ENCODE measurements at regions of chr20 and their contacts with region 1.

Region 1: GRCh38 chr20:38073307-38074071 is 39.9 kb downstream of the RPRD1B start:
- DNase-seq: peak; percentile 46
- CTCF ChIP-seq: peak; percentile 58

Region 2: GRCh38 chr20:38049800-38050199 is 23.7 kb before region 1 on chr20:
- CTCF ChIA-PET with region 1: interaction called, 29 read pairs
- POLR2A ChIA-PET with region 1: no interaction called
- DNase-seq: no peak
- CTCF ChIP-seq: no peak

Region 3: GRCh38 chr20:38057351-38057972 is 16.0 kb before region 1 on chr20:
- CTCF ChIA-PET with region 1: interaction called, 130 read pairs
- POLR2A ChIA-PET with region 1: no interaction called
- DNase-seq: peak; percentile 74
- CTCF ChIP-seq: peak; percentile 79

Region 4: DNA sequence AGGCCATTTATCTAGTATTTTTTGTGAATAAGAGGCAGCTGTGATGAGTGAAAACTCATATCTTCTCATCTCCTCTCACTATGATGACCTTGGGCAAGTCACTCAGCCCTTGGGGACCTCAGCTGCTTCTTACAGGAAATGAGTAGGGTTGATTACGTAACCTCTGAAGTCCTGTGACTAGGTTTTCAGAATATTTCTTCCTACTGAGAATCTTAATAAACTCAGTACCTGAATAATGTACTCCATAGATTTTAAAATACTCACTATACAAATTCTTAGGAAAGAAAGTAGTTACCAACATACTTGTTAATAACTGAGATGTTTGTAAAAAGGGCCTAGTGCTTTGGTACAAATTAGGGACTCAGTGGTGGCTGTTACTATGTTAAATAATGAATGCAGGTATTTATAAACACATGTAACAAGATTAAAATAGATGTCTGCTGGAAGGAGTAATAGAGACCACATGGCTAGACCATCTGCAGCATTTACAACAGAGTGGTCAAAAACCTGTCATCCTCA is 20.9 kb after region 1 on chr20:
- CTCF ChIA-PET with region 1: interaction called, 144 read pairs
- POLR2A ChIA-PET with region 1: interaction called, 3 read pairs
- DNase-seq: peak; percentile 72
- CTCF ChIP-seq: no peak

Region 5: GRCh38 chr20:38113401-38114325 is 40.2 kb after region 1 on chr20:
- CTCF ChIA-PET with region 1: interaction called, 40 read pairs
- POLR2A ChIA-PET with region 1: no interaction called
- DNase-seq: no peak
- CTCF ChIP-seq: no peak

Region 6: DNA sequence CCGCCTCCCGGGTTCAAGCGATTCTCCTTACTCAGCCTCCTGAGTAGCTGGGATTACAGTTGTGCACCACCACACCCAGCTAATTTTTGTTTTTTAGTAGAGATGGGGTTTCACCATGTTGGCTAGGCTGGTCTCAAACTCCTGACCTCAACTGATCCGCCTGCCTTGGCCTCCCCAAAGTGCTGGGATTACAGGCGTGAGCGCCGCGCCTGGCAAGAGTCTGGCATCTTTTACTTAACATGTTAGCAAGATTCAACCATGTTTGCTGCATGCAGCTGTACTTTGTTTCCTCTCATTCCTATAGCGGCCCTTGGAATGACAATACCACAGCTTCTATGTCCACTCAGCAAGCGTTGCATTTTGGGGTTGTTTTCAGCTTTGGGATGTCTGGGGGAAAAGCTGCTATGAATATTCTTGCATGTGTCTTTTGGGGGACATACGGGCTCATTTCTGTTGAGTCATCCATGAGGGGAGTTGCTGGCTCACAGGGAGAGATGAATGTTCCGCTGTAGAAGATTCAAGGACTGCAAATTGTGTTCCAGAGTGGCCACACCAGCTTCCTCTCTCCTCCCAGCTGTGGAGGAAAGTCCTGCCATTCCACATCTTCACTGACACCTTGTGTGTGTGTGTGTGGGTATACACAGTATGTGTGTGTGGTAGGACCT is 48.1 kb after region 1 on chr20:
- CTCF ChIA-PET with region 1: interaction called, 40 read pairs
- POLR2A ChIA-PET with region 1: no interaction called
- DNase-seq: no peak
- CTCF ChIP-seq: no peak

Region 7: DNA sequence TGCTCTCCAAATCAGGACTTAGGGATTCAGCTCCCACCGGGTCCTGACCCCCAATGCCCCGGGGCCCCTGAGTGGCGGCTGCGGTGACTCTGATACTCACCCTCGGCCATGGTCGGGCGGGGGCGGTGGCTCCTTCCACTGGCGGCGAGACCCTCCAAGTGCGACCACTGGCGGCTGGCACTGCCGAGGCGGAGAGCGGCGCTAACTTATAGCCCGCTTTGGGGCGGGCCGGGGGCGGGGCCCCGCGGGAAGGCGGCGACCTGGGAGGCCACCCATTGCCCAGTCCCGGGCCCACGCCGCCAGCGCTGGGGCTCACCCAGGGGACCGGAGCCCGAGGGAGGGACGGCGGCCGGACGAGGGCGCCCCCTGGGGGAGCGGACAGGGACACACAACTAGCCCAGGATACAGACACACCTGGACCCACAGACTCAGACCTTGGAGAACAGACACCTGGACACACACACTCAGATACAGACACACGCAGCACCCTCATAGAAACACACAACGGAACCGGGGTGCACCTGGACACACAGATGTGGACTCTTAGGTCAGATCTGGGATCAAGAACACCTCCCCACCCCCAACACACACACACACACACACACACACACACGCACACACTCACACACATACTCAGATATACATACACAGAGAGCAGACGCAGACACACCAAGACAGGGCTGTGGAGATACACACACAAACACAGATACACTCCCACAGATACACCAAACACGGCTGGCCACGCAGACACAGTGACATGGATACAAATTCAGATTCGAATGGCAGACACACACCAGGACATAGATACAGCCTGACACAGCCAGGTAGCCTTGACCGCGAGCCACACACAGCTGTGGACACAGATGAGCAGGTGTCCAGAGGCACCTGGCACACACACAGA is 91.8 kb after region 1 on chr20 and contains the start of gene TGM2:
- CTCF ChIA-PET with region 1: interaction called, 33 read pairs
- POLR2A ChIA-PET with region 1: no interaction called
- DNase-seq: peak; percentile 89
- CTCF ChIP-seq: peak; percentile 74